Activated CD4-positive, alpha-beta T cell treated with anti-CD3 and anti-CD28 coated beads for 36 hours (primary cell): ENCODE measurements at regions of chr20 and their contacts with region 1.

Region 1: DNA sequence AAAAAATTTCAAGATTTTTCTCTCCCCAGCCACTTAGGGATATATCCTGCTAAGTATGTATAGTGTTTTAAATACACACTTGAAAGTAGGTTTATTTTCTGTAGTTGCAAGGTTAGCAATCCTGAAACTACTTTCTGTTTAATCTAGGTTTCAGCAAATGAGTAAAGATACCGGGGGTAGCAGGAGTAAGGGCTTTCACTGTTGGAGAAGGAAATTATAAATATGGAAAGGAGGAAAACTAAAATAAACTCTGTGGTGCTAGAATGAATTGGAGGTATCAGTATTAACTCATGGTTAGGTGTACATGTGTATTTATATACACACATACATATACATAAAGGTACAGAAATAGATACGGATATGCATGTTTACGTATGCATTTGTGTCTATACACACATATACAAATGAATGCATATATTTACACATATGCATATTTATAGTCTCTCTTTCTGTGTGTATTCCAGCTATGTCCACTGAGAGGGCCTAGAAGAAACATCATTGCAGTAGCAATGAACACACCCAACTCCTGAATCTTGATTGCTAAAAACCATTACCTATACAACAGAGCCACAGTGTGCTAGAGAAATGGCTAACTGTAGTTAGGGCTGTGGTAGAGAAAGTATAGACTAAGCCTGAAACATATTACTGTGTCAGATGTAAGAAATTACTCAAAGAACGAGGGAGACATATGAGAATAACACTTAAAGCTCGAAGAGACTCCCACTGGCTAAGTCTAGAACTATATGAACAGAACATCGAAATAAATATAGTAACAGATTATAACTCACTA is 95.9 kb upstream of the EMILIN3 start:
- DNase-seq: no peak
- ATAC-seq: peak; percentile 81
- H3K4me3 Mint-ChIP-seq: no peak overlapping the region
- H3K27ac Mint-ChIP-seq: no peak overlapping the region
- H3K4me1 Mint-ChIP-seq: peaks cover 19% of the 10 kb centered on the region
- H3K27me3 Mint-ChIP-seq: no peaks in the 10 kb centered on the region

Region 2: GRCh38 chr20:41436679-41437078 is 25.9 kb before region 1 on chr20:
- CTCF ChIA-PET with region 1: no interaction called
- POLR2A ChIA-PET with region 1: no interaction called
- intact Hi-C with region 1: loop called (anchors 1 to 2 kb)
- DNase-seq: no peak
- ATAC-seq: peak; percentile 69
- H3K4me3 Mint-ChIP-seq: no peak overlapping the region
- H3K27ac Mint-ChIP-seq: peak overlapping the region; percentile 47
- H3K4me1 Mint-ChIP-seq: peaks cover 79% of the 10 kb centered on the region
- H3K27me3 Mint-ChIP-seq: no peaks in the 10 kb centered on the region

Region 3: GRCh38 chr20:41443691-41444090 is 18.9 kb before region 1 on chr20:
- CTCF ChIA-PET with region 1: no interaction called
- POLR2A ChIA-PET with region 1: no interaction called
- intact Hi-C with region 1: loop called in 1 of 2 experiments (anchors 1 kb)
- DNase-seq: peak; percentile 39
- ATAC-seq: peak; percentile 71
- H3K4me3 Mint-ChIP-seq: no peak overlapping the region
- H3K27ac Mint-ChIP-seq: peak overlapping the region; percentile 49
- H3K4me1 Mint-ChIP-seq: peaks cover 36% of the 10 kb centered on the region
- H3K27me3 Mint-ChIP-seq: no peaks in the 10 kb centered on the region